ENCODE measurements at regions of chr2 and their contacts with region 1.

Region 1: GRCh38 chr2:214946949-214947348 is 137.5 kb upstream of the BARD1 start:
- DNase-seq: no peak
- H3K4me3 ChIP-seq: no peak overlapping the region
- H3K27ac ChIP-seq: no peak overlapping the region
- H3K4me1 ChIP-seq: no peaks in the 10 kb centered on the region
- CTCF ChIP-seq: no peak

Region 2: GRCh38 chr2:215507136-215507535 is 560.2 kb after region 1 on chr2:
- CTCF ChIA-PET with region 1: no interaction called
- POLR2A ChIA-PET with region 1: interaction called, 11 read pairs
- intact Hi-C with region 1: no loop called
- DNase-seq: no peak
- H3K4me3 ChIP-seq: no peak overlapping the region
- H3K27ac ChIP-seq: no peak overlapping the region
- H3K4me1 ChIP-seq: no peaks in the 10 kb centered on the region
- CTCF ChIP-seq: no peak

Measured in OCI-LY7 (cell line).